ENCODE measurements at regions of chr3 and their contacts with region 1.

Region 1: DNA sequence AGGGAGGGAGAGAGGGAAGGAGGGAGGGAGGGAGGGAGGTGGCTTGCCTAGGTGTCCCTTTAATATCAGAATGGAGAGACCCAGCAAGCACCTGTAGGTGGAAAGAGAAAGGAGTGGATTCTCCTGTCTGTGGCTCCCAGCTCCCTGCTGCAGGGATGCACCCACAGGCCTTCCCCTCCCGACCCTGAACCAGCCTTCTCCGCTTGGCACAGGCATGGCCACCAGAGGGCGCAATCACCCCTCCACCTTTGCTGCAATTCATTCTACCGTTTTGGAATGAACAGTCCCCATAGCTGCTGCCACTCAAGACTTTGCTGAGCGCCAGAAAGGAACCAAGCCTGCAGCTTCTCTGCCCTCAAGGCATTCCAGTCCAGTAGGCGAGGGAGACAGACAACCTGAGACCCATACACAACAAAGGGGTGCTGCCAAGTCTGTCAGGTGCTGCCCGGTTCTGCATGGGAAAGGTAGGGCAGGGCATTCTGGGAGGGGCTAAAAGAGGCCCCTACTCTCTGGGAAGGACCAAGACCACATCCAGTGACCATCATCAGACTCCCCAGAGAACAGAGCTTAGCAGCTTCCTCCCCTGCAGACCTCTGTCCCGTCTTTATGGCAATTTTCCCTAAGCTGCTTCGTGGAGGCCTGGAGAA is 4.9 kb downstream of the TLR9 start:
- DNase-seq: peak; percentile 90 to 97
- ATAC-seq: peak; percentile 81
- H3K4me3 ChIP-seq: no peak overlapping the region
- H3K27ac ChIP-seq: no peak overlapping the region
- H3K4me1 ChIP-seq: no peaks in the 10 kb centered on the region
- H3K27me3 ChIP-seq: no peaks in the 10 kb centered on the region

Region 2: DNA sequence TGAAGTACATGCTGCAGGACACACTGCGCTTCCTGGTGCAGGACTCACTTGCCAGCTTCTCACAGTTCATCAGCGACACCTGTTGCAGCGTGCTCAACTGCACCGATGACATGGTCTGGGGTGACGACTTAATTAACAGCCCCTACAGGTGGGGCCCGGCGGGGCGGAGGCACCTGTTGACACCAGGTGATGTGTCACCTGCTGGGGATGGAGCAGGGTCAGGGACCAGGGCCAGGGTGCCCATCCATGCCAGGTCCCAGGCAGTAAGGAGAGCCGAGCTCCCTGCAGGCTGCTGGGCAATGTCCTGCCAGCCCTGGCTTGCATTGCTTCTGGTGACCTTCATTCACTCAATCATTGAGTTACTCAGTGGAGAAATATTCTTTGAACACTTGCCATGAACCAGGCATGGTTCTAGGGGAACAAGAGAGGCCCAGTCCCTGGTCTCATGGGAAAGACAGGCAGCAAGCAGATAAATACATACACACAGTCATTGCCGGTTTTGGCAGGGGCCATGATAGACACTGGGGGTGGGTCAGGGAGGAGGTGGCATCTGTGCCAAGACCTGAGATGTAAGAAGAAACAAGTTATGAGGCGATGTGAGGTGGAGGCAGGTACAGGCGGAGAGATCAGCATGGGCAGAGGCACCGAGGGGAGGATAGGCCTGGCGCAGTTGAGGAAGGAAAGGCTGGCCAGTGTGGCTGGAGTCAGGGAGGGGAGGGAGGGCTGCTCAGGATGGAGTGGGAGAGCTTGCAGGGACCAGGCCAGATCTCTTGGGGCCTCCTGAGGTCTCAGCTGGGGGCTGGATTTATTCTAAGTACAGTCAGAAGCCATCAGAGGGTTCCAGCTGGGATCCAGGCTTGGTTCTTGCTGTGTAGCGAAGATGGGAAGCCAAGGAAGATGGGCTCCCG is 126.4 kb after region 1 on chr3:
- intact Hi-C with region 1: loop called in 1 of 2 experiments (anchors 2 kb)
- DNase-seq: peak in 1 of 2 donors; percentile 74
- ATAC-seq: peak; percentile 50
- H3K4me3 ChIP-seq: no peak overlapping the region
- H3K27ac ChIP-seq: peak overlapping the region in 1 of 2 donors; percentile 65
- H3K4me1 ChIP-seq: no peaks in the 10 kb centered on the region
- H3K27me3 ChIP-seq: no peaks in the 10 kb centered on the region

Region 3: DNA sequence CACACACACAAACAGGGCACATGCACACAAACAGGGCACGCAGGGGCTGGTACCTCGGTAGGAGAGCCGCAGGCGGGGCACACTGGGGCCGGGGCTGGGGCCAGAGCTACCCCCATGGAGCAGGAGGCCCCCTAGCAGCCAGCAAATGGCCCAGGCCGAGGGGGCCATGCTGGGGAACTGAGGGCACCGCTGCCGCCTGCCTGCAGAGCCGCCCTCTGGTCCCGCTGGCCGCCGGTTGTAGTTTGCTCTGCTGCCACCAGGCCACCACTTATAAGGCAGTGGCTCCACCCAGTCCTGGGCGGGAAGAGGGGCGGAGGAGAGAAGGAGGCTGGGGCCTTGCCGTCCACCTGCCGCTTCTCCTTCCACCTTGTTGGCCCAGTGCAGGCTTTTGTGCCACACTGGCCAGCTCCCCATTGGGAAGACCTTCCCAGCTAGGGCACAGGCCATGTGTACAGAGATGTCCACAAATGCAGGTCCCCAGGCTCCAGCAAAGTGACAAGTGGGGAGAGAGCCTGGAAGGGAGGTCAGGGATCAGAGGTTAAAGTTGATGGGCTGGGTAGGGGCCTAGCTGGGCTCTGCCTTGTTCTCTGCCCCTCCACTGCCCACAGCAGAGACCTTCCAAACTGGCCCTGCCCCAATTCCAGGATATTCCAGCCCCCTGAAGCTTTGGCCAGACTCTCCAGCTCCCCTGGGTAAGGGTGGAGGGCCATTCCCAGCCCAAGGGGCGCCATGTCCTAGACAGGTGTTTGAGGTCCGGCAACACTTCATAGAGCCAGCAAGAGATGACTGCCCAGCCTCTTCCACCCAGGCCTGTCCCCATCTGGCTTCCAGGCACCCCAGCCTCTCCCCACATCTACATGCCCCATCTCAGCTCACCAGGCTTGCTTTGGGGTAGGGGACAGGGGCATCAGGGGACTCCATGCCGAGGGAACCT is 224.6 kb after region 1 on chr3 and contains the start of gene SEMA3G:
- intact Hi-C with region 1: loop called in 1 of 2 experiments (anchors 5 kb)
- DNase-seq: peak; percentile 87 to 91
- ATAC-seq: peak; percentile 67
- H3K4me3 ChIP-seq: no peak within 1 kb of the TSS
- H3K27ac ChIP-seq: no peak within 1 kb of the TSS
- H3K4me1 ChIP-seq: no peaks in the 10 kb centered on the region
- H3K27me3 ChIP-seq: no peaks in the 10 kb centered on the region
- total RNA-seq, gene SEMA3G: 12.5 to 23.8 TPM